OCI-LY7 (cell line): ENCODE measurements at regions of chr11 and their contacts with region 1.

Region 1: GRCh38 chr11:4072668-4073285 is 21.8 kb upstream of the RRM1 start:
- DNase-seq: peak; percentile 80
- H3K4me3 ChIP-seq: no peak overlapping the region
- H3K27ac ChIP-seq: no peak overlapping the region
- H3K4me1 ChIP-seq: peaks cover 20% of the 10 kb centered on the region
- CTCF ChIP-seq: peak; percentile 94

Region 2: DNA sequence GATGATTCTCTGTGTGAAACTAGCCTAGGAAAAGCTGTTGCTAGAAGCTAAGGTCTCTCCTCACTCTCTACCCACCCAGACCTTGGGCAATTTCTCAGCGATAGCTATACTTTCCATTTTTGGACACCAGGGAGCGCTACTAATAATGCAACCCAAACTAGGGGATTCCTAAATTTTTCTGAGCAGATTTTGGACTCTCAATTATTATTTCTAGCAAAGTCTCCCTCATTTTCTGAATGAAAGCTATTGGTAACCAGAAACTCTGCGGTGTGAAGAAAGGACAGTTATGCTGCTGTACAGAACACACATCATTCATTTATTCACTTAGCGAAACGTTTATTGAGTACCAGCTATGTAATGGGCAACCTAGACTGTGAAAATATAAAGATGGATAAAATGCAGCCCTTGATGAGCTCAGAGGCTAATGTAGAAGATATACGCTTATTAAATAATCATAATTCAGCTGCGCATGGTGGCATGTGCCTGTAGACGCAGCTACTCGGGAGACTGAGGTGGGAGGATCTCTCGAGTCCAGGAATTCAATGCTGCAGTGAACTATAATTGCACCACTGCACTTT is 223.4 kb before region 1 on chr11:
- CTCF ChIA-PET with region 1: interaction called, 36 read pairs
- POLR2A ChIA-PET with region 1: interaction called, 38 read pairs
- intact Hi-C with region 1: loop called (anchors 1 kb)
- DNase-seq: peak; percentile 69
- H3K4me3 ChIP-seq: no peak overlapping the region
- H3K27ac ChIP-seq: no peak overlapping the region
- H3K4me1 ChIP-seq: peaks cover 20% of the 10 kb centered on the region
- CTCF ChIP-seq: peak; percentile 91

Region 3: GRCh38 chr11:3920148-3920852 is 152.5 kb before region 1 on chr11:
- CTCF ChIA-PET with region 1: no interaction called
- POLR2A ChIA-PET with region 1: no interaction called
- intact Hi-C with region 1: loop called (anchors 10 kb)
- DNase-seq: no peak
- H3K4me3 ChIP-seq: no peak overlapping the region
- H3K27ac ChIP-seq: no peak overlapping the region
- H3K4me1 ChIP-seq: peaks cover 29% of the 10 kb centered on the region
- CTCF ChIP-seq: no peak

Region 4: GRCh38 chr11:4006946-4007680 is 65.7 kb before region 1 on chr11:
- CTCF ChIA-PET with region 1: no interaction called
- POLR2A ChIA-PET with region 1: no interaction called
- intact Hi-C with region 1: no loop called
- DNase-seq: no peak
- H3K4me3 ChIP-seq: no peak overlapping the region
- H3K27ac ChIP-seq: no peak overlapping the region
- H3K4me1 ChIP-seq: no peaks in the 10 kb centered on the region
- CTCF ChIP-seq: no peak